Heart left ventricle (tissue), 16 donors: ENCODE measurements at regions of chr19 and their contacts with region 1.

Region 1: GRCh38 chr19:3984908-3985642 is at the start of gene EEF2:
- DNase-seq: peak; percentile 91 to 95 (median 93)
- ATAC-seq: peak; percentile 48 to 73 (median 67)
- H3K4me3 ChIP-seq: peak within 1 kb of the TSS; percentile 64 to 100 (median 82)
- H3K27ac ChIP-seq: peak within 1 kb of the TSS; percentile 80 to 98 (median 92)
- H3K4me1 ChIP-seq: peaks cover 10 to 66% (median 44%) of the 10 kb centered on the region in 12 donors
- H3K27me3 ChIP-seq: no peaks in the 10 kb centered on the region
- CTCF ChIP-seq: no peak
- POLR2A ChIP-seq: peak; percentile 92 to 100
- total RNA-seq, gene EEF2: 1,373 to 2,686 (median 2,215) TPM

Region 2: DNA sequence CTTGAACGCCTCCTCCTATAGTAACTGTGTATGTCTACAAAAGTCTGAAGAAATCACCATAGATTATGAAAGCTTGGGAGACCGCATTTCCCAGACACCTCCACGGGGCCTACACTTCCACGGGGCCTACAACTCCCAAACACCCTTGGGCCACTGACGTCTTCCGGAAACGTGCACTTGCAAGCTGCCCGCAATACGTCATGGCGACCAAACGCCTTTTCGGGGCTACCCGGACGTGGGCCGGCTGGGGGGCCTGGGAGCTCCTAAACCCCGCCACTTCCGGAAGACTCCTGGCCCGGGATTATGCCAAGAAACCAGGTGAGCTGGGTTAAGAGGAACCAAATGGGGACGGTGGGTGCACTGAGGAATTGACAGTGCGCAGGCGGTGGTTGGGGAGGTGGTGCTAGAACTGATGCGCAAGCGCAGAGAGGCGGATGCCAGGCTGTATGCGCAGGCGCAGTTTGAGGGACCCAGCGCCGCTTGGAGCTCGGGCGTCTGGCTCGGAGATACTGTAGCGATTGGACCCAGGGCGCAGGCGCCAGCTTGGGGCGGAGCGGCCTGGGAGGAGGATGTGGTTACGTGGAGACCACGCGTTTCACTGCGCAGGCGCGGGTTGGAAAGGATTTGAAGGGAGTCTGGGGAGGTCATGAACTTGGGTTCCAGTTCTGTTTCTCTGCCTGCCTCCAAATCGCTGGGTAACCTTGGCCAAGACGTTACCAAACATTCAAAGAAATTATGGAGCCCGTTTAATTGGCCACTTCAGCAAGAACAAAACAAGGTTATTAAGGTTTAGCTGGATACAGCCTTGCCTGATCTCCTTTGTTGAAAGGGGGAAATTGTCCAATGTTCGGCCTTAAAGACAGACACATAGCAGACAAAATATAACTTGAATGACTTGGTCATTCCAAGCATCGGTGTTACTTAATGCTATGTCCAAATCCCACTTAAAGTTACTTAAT is 222.3 kb before region 1 on chr19 and contains the start of gene MRPL54:
- intact Hi-C with region 1: loop called in 5 of 10 experiments (anchors 5 to 10 kb)
- DNase-seq: peak; percentile 99 to 100 (median 99)
- ATAC-seq: peak; percentile 94 to 97 (median 96)
- H3K4me3 ChIP-seq: peak within 1 kb of the TSS; percentile 69 to 98 (median 90)
- H3K27ac ChIP-seq: peak within 1 kb of the TSS; percentile 90 to 99 (median 97)
- H3K4me1 ChIP-seq: peaks cover 5 to 43% (median 28%) of the 10 kb centered on the region in 12 donors
- H3K27me3 ChIP-seq: no peaks in the 10 kb centered on the region
- CTCF ChIP-seq: no peak
- POLR2A ChIP-seq: peak in 1 of 2 donors; percentile 54
- total RNA-seq, gene MRPL54: 58.9 to 96.9 (median 69.1) TPM

Region 3: GRCh38 chr19:4065430-4066175 is 80.5 kb after region 1 on chr19:
- intact Hi-C with region 1: loop called in 2 of 10 experiments (anchors 5 kb)
- DNase-seq: peak; percentile 98 to 99 (median 98)
- ATAC-seq: peak; percentile 80 to 91 (median 85)
- H3K4me3 ChIP-seq: peak overlapping the region in 11 of 12 donors; percentile 91 to 100 (median 97)
- H3K27ac ChIP-seq: peak overlapping the region; percentile 91 to 100 (median 99)
- H3K4me1 ChIP-seq: peaks cover 8 to 57% (median 44%) of the 10 kb centered on the region in 12 donors
- H3K27me3 ChIP-seq: no peaks in the 10 kb centered on the region
- CTCF ChIP-seq: peak in 1 of 12 donors; percentile 7
- POLR2A ChIP-seq: no peak

Region 4: DNA sequence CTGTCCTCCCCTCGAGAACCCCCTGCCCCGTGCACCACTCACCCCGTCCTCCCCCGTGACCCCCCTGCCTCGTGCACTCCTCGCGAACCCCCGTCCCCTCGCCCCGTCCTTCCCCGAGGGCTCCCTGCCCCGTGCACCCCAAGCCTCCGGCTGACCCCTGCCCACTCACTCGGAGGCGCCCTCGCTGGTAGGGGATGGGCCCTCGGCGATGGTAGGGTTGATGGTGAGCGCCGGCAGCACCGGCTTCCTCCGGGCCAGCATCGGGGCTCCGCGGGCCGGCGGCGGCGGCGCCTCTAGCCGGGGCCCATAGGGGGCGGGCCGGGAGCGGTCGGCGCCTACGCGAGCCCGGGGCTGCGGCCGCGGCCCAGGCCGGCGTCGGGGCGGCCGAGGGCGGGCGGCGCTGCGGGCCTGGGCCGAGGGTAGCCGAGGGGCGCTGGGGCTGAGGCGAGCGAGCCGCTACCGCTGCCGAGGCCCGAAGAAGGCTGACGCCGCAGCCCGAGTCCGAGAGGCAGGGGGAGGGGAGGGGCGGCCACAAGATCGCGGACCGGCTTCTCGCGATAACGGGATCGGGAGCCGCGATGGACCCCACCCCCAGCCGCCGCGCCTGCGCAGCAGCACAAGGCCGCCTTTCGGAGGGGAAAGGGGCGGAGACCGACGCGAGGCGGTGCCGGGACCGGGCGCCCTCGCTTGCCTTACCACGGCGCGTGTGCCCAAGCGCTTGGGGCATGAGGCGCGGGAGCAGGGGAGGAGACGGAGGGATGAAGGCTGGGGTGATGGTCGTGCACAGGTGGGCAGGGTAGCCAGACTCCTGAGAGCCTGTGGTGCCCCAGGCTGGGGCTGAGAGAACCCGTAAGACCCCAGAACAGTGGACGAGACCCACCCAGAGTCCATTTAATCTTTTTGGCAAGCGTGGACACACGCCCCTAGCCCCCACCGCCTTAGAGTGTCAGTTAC is 138.8 kb after region 1 on chr19 and contains the start of gene MAP2K2:
- intact Hi-C with region 1: loop called in 3 of 10 experiments (anchors 1 to 10 kb)
- DNase-seq: peak; percentile 95 to 98 (median 96)
- ATAC-seq: peak; percentile 92 to 99 (median 98)
- H3K4me3 ChIP-seq: peak within 1 kb of the TSS; percentile 44 to 95 (median 78)
- H3K27ac ChIP-seq: peak within 1 kb of the TSS in 11 of 12 donors; percentile 31 to 84 (median 72)
- H3K4me1 ChIP-seq: peaks cover 0 to 33% (median 16%) of the 10 kb centered on the region in 12 donors
- H3K27me3 ChIP-seq: no peaks in the 10 kb centered on the region
- CTCF ChIP-seq: peak in 2 of 12 donors; percentile 17 to 22
- POLR2A ChIP-seq: peak in 1 of 2 donors; percentile 86
- total RNA-seq, gene MAP2K2: 95.3 to 154 (median 108) TPM

Region 5: GRCh38 chr19:4182084-4182810 is 197.2 kb after region 1 on chr19 and contains the starts of genes ANKRD24 and SIRT6:
- intact Hi-C with region 1: loop called in 7 of 10 experiments (anchors 2 to 10 kb)
- DNase-seq: peak; percentile 97 to 98 (median 97)
- ATAC-seq: peak; percentile 95 to 98 (median 96)
- H3K4me3 ChIP-seq: peak within 1 kb of the TSS; percentile 70 to 98 (median 88)
- H3K27ac ChIP-seq: peak within 1 kb of the TSS; percentile 11 to 93 (median 84)
- H3K4me1 ChIP-seq: peaks cover 0 to 27% (median 15%) of the 10 kb centered on the region in 12 donors
- H3K27me3 ChIP-seq: no peaks in the 10 kb centered on the region
- CTCF ChIP-seq: no peak
- POLR2A ChIP-seq: peak in 1 of 2 donors; percentile 76
- total RNA-seq, gene ANKRD24: 0.23 to 1.4 (median 0.51) TPM in 6 of 9 donors, not detected in the others
- total RNA-seq, gene SIRT6: 10.2 to 16.7 (median 12.7) TPM

Region 6: GRCh38 chr19:4208385-4209094 is 223.5 kb after region 1 on chr19:
- intact Hi-C with region 1: loop called in 7 of 10 experiments (anchors 2 to 10 kb)
- DNase-seq: no peak
- ATAC-seq: no peak
- H3K4me3 ChIP-seq: no peak overlapping the region
- H3K27ac ChIP-seq: no peak overlapping the region
- H3K4me1 ChIP-seq: peaks cover 0 to 8% (median 0%) of the 10 kb centered on the region in 12 donors
- H3K27me3 ChIP-seq: peaks cover 0 to 11% (median 0%) of the 10 kb centered on the region in 9 donors
- CTCF ChIP-seq: peak in 7 of 12 donors; percentile 4 to 39 (median 19)
- POLR2A ChIP-seq: no peak